HepG2 (cell line): ENCODE measurements at regions of chr21 and their contacts with region 1.

Region 1: GRCh38 chr21:35400233-35400957 is 351.3 kb upstream of the RUNX1 start:
- DNase-seq: peak; percentile 67
- ATAC-seq: peak; percentile 87
- H3K4me3 ChIP-seq: no peak overlapping the region
- H3K27ac ChIP-seq: no peak overlapping the region
- H3K4me1 ChIP-seq: no peaks in the 10 kb centered on the region
- H3K27me3 ChIP-seq: peaks cover 0 to 11% of the 10 kb centered on the region in 2 experiments; a peak in 3 of 5 replicates
- CTCF ChIP-seq: peak; percentile 69
- EP300 ChIP-seq: no peak
- POLR2A ChIP-seq: no peak
- RAD21 ChIP-seq: peak; percentile 62

Region 2: DNA sequence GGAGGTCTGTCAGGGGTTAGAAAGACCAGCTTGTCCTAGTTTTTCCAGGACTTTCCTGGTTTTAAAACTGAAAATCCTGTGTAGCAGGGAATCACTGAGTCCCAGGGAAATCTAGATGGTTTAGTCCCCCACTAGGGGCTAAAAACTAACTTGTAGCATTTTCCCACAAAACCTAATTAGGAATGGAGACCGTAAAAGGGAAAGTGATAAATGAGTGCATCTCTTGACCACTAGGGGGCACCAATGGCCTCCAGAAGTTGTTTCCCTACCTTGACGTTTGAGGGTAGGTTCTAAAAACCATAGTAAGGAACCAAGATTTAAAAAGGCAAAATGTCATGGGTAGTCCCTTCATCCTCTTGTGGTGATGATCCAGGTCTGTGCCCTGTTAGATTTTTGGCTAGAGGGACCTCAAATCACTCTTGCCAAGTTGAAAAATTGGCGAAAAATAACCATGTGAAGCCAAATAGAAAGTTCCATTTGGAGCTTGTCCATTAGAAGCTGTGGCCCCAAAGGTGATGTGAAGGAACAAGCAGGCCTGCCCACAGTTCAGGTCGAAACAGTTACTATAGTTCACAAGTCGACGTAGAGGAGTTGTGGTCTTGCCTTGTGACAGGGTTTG is 707.1 kb before region 1 on chr21:
- CTCF ChIA-PET with region 1: interaction called, 7 read pairs
- POLR2A ChIA-PET with region 1: no interaction called
- in situ Hi-C with region 1: no loop called
- intact Hi-C with region 1: loop called (anchors 2 kb)
- DNase-seq: peak; percentile 55
- ATAC-seq: peak; percentile 56
- H3K4me3 ChIP-seq: no peak overlapping the region
- H3K27ac ChIP-seq: no peak overlapping the region
- H3K4me1 ChIP-seq: 0 out of 2 replicates have a peak, but pooled peaks cover 13% of the 10 kb centered on the region
- H3K27me3 ChIP-seq: peaks cover 0 to 34% of the 10 kb centered on the region in 2 experiments; a peak in 2 of 5 replicates
- CTCF ChIP-seq: peak; percentile 75
- EP300 ChIP-seq: no peak
- POLR2A ChIP-seq: no peak
- RAD21 ChIP-seq: peak; percentile 27; the same call in 1 of the 2 replicates

Region 3: DNA sequence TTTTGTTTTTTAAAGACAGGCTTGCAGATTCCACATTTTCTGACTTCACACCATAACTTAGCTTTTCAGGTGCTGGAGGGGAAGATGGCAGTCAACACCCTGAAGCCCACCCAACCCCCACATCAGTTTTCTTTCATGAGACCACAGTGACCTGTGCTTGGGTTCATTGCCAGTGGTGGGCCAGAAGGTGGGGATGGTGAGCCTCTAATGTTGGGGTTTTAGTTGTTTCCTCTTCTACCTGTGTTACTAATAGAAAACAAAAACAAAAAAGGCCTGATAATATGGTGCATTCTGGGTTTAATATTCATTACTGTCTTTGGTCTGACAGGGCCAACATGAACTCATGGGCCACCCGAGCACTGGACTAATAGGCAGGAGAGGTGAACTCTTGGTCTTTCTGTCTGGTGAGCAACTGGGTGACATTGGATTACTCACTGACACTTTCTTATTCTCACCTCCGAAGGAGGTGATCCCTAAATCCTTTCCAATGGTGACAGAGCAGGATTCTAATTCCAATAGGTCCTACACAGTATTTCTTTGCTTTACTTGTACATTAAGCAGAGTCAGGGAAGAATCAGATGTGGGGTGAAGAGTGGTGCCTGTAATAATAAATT is 598.8 kb before region 1 on chr21:
- CTCF ChIA-PET with region 1: no interaction called
- POLR2A ChIA-PET with region 1: no interaction called
- in situ Hi-C with region 1: no loop called
- intact Hi-C with region 1: loop called (anchors 5 kb)
- DNase-seq: no peak
- ATAC-seq: peak; percentile 71
- H3K4me3 ChIP-seq: no peak overlapping the region
- H3K27ac ChIP-seq: peak overlapping the region; percentile 41
- H3K4me1 ChIP-seq: peaks cover 58% of the 10 kb centered on the region
- H3K27me3 ChIP-seq: no peaks in the 10 kb centered on the region
- CTCF ChIP-seq: peak; percentile 71
- EP300 ChIP-seq: no peak
- POLR2A ChIP-seq: no peak
- RAD21 ChIP-seq: no peak; the same call in 1 of the 2 replicates

Region 4: DNA sequence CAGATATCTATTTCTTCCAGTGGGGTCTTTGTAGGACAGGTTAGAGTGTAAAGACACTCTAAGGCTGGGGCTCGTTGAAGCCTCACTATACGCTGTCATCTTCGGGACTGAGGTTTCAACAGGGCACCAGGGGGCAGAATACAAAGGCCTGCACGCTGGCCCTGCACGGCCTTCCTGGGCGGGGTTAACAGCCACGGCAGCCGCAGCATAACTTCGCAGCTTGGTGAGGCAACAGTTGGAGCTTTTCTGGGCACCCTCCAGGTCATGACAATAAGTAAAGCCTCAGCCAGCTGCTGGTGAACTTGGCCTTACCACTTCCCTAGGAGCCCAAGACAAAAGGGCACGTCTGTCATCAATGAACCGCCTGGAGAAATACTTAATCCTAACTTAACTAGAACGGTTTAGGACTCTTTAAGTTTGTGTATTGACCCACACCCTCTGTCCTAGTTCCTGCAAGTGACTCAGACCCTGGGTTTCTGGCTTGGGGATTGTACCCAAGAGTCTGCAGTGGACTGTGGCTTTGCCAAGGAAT is 349.0 kb before region 1 on chr21:
- CTCF ChIA-PET with region 1: no interaction called
- POLR2A ChIA-PET with region 1: no interaction called
- in situ Hi-C with region 1: no loop called
- intact Hi-C with region 1: loop called (anchors 1 kb)
- DNase-seq: peak; percentile 82
- ATAC-seq: peak; percentile 99
- H3K4me3 ChIP-seq: peak overlapping the region in 2 of 3 experiments; percentile 26 to 32; a peak in 1 of 6 replicates
- H3K27ac ChIP-seq: no peak overlapping the region
- H3K4me1 ChIP-seq: peaks cover 45% of the 10 kb centered on the region
- H3K27me3 ChIP-seq: no peaks in the 10 kb centered on the region
- CTCF ChIP-seq: peak; percentile 88
- EP300 ChIP-seq: peak in 1 of 2 experiments; percentile 19; a peak in 1 of 4 replicates
- POLR2A ChIP-seq: no peak
- RAD21 ChIP-seq: peak; percentile 83